Left ventricle myocardium inferior (tissue), 1 donor: ENCODE measurements at regions of chr14 and their contacts with region 1.

Region 1: GRCh38 chr14:23562268-23563203 is 5.1 kb downstream of the AP1G2 start:
- DNase-seq: peak; percentile 48
- H3K4me3 ChIP-seq: no peak overlapping the region
- H3K27ac ChIP-seq: no peak overlapping the region
- H3K4me1 ChIP-seq: peaks cover 19% of the 10 kb centered on the region
- H3K27me3 ChIP-seq: no peaks in the 10 kb centered on the region
- CTCF ChIP-seq: peak; percentile 95

Region 2: GRCh38 chr14:23478111-23478759 is 84.3 kb before region 1 on chr14:
- intact Hi-C with region 1: loop called (anchors 2 kb)
- DNase-seq: peak; percentile 26
- H3K4me3 ChIP-seq: no peak overlapping the region
- H3K27ac ChIP-seq: no peak overlapping the region
- H3K4me1 ChIP-seq: no peaks in the 10 kb centered on the region
- H3K27me3 ChIP-seq: no peaks in the 10 kb centered on the region
- CTCF ChIP-seq: peak; percentile 75

Region 3: GRCh38 chr14:23766737-23767401 is 204.3 kb after region 1 on chr14:
- intact Hi-C with region 1: no loop called
- DNase-seq: no peak
- H3K4me3 ChIP-seq: no peak overlapping the region
- H3K27ac ChIP-seq: no peak overlapping the region
- H3K4me1 ChIP-seq: no peaks in the 10 kb centered on the region
- H3K27me3 ChIP-seq: peaks cover 20% of the 10 kb centered on the region
- CTCF ChIP-seq: no peak